Common myeloid progenitor, CD34-positive (primary cell): ENCODE measurements at regions of chr14 and their contacts with region 1.

Region 1: DNA sequence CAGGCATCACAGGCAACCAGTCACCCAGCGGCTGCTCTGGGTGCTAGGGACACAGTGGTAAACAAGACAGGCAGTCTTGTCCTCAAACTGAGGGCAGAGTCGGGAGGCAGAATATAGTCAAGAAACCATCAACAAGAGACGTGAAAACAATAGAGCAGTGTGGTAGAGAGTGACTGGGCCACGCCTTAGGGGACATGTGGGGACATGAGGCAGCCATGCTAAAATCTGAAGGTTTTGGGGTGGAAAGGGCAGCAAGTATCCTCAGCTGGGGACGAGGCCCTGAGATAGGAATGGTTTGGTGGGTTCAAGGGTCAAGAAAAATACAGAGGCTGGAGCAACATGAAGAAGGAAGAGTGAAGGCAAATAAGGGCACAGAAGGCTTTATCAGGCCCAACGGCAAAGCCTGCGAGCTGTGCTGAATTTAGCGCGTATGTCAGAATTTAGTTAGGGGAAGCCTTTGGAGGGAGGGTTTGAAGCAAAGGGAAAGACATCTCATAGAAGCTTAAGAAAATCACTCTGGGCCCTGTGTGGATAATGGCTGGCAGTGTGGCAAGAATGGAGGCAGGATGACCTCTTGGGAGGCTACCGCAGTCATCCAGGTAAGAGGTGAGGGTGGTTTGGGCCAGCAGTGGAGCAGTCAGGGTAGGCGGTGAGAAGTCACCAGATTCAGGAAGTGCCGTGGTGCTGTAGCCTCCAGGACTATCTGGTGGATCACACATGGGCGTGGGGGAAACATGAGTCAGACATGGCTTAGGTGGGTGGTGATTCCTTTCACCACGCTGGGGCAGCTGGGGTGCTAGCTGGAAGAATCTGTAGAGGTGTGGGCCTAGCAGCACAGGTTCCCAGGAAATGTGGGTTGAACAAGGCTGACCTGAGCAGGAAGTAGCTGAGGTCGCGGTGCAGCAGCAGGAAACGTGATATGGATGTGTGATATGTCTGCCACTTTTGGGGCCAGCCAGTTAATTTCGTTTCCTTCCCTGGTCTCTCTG is 3.0 kb downstream of the EVL start:
- DNase-seq: peak; percentile 93 to 99 (median 98)
- H3K4me3 ChIP-seq: peak overlapping the region in 5 of 7 experiments; percentile 9 to 64 (median 44)
- H3K27ac ChIP-seq: peak overlapping the region; percentile 82 to 92
- H3K4me1 ChIP-seq: peaks cover 50 to 100% (median 98%) of the 10 kb centered on the region in 4 experiments
- H3K27me3 ChIP-seq: no peaks in the 10 kb centered on the region

Region 2: GRCh38 chr14:100056964-100057795 is 11.1 kb before region 1 on chr14:
- CTCF ChIA-PET with region 1: interaction called, 1,065 read pairs
- POLR2A ChIA-PET with region 1: interaction called, 3 read pairs
- DNase-seq: peak; percentile 70 to 81 (median 79)
- H3K4me3 ChIP-seq: no peak overlapping the region
- H3K27ac ChIP-seq: no peak overlapping the region
- H3K4me1 ChIP-seq: peaks cover 12 to 56% (median 29%) of the 10 kb centered on the region in 4 experiments
- H3K27me3 ChIP-seq: no peaks in the 10 kb centered on the region

Region 3: GRCh38 chr14:100078991-100079725 is 10.9 kb after region 1 on chr14:
- CTCF ChIA-PET with region 1: interaction called, 1,065 read pairs
- POLR2A ChIA-PET with region 1: interaction called, 12 read pairs
- DNase-seq: peak; percentile 73 to 95 (median 93)
- H3K4me3 ChIP-seq: peak overlapping the region in 5 of 7 experiments; percentile 15 to 57 (median 26)
- H3K27ac ChIP-seq: peak overlapping the region; percentile 62 to 65
- H3K4me1 ChIP-seq: peaks cover 45 to 95% (median 88%) of the 10 kb centered on the region in 4 experiments
- H3K27me3 ChIP-seq: no peaks in the 10 kb centered on the region